HepG2 (cell line): ENCODE measurements at regions of chr3 and their contacts with region 1.

Region 1: GRCh38 chr3:128307029-128307633 is 153.8 kb downstream of the EEFSEC start:
- DNase-seq: peak; percentile 60
- ATAC-seq: peak; percentile 97
- H3K4me3 ChIP-seq: no peak overlapping the region
- H3K27ac ChIP-seq: no peak overlapping the region
- H3K4me1 ChIP-seq: peaks cover 13% of the 10 kb centered on the region
- H3K27me3 ChIP-seq: no peaks in the 10 kb centered on the region
- CTCF ChIP-seq: peak; percentile 93
- EP300 ChIP-seq: no peak
- POLR2A ChIP-seq: no peak
- RAD21 ChIP-seq: peak; percentile 77

Region 2: DNA sequence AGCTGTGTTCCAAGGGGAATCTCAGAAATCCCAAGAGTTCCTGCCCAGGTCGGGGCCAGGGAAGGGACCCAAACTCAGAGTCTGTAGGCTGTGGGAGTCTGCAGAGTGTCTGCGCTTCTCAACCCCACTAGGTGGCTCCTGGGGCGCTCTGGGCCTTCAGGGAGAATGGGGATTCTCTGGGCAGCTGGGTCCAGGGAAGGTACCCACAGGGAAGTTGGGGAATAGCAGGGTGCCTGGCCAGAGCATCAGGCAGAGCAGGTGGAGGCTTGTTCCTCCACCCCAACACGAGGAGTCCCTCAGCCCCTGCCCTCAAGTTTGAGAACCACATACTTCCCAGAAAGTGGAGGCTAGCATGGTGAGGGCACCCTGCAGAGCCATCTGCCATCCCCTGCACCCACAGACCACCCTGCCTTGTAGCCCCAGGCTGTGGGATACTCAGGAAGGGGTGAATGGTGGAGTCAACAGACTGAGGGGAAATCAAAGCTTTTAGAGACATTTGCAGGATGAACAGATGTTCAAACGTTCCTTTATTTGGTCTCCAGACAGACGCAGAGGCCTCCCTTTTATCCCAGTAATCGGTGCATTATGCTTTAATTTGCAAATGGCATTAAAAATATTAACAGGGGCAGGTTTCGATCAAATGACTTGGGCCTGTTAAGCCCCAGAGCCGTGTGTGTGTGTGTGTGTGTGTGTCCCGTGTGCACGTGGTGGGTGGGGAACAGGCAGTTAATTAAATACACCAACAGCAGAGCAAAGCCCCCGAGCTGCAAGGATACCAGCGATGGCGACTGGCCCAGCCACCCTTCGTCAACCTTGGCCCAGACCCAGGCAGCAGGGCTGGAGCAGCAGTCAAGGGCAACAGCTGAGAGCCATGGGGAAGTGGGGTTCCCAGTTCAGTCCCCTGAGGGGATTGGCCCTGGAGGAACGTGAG is 101.8 kb after region 1 on chr3:
- CTCF ChIA-PET with region 1: no interaction called
- POLR2A ChIA-PET with region 1: no interaction called
- in situ Hi-C with region 1: no loop called
- intact Hi-C with region 1: no loop called
- DNase-seq: no peak
- ATAC-seq: peak; percentile 17; the same call in 1 of the 3 replicates
- H3K4me3 ChIP-seq: no peak overlapping the region
- H3K27ac ChIP-seq: no peak overlapping the region
- H3K4me1 ChIP-seq: peaks cover 12% of the 10 kb centered on the region; the same call in 1 of the 2 replicates
- H3K27me3 ChIP-seq: no peaks in the 10 kb centered on the region
- CTCF ChIP-seq: no peak
- EP300 ChIP-seq: no peak
- POLR2A ChIP-seq: no peak
- RAD21 ChIP-seq: no peak

Region 3: DNA sequence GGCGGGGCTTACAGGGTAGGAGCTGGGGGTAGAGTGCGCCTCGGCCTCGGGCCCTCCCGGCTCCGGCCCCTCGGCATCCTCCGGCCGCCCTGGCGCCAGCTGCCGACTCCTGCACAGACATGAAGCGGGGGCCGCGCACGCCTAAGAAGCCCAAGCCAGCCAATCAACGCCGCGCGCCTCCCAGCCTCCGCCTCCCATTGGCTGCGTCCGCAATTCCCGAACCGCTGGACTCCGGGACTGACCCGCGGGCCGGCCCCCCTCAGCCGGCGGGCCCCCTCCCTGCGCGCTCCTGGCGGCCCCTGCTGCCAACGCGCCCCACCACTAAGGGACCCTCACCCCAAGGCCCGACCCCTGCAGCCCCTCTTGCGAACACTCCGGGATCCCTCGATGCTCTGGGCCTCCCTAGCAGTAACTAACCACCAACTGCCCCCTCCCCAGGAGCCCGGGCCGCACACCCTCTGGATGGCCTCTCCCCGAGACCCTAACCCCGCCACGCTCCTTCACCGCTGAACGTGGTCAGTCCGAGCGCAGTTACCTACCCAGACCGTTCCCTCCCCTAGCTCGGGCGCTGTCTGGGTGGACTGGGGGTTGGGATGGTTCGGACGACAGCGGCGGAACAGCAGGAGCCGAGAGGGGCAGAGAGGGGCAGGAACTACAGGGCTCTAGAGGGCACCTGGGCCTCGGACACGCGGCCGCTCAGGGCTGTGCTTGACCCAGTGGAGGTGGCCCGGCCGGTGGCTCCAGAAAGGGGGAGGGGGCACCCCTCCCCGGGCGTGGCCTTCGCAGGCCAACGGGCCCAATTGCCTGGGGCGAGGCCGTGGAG is 180.9 kb after region 1 on chr3:
- CTCF ChIA-PET with region 1: no interaction called
- POLR2A ChIA-PET with region 1: no interaction called
- in situ Hi-C with region 1: loop called (anchors 5 kb)
- intact Hi-C with region 1: no loop called
- DNase-seq: peak; percentile 89
- ATAC-seq: peak; percentile 81
- H3K4me3 ChIP-seq: peak overlapping the region; percentile 87 to 91 (median 87)
- H3K27ac ChIP-seq: peak overlapping the region; percentile 80
- H3K4me1 ChIP-seq: peaks cover 32% of the 10 kb centered on the region
- H3K27me3 ChIP-seq: no peaks in the 10 kb centered on the region
- CTCF ChIP-seq: 0 out of 2 replicates have a peak, but pooled peaks have one; percentile 5
- EP300 ChIP-seq: 0 out of 4 replicates have a peak, but pooled peaks of 1 of the 2 experiments have one; percentile 19
- POLR2A ChIP-seq: peak in 1 of 2 experiments; percentile 80; a peak in 2 of 4 replicates
- RAD21 ChIP-seq: no peak; the same call in 1 of the 2 replicates